ENCODE measurements at regions of chr19 and their contacts with region 1.

Region 1: GRCh38 chr19:51259348-51260245 is 8.7 kb downstream of the SIGLECL1 start:
- DNase-seq: peak; percentile 48
- H3K4me3 ChIP-seq: peak overlapping the region in 1 of 2 experiments; percentile 27; a peak in 1 of 4 replicates
- H3K27ac ChIP-seq: no peak overlapping the region
- H3K4me1 ChIP-seq: no peaks in the 10 kb centered on the region
- H3K27me3 ChIP-seq: peaks cover 12% of the 10 kb centered on the region; the same call in 1 of the 2 replicates
- CTCF ChIP-seq: peak; percentile 70
- EP300 ChIP-seq: no peak
- RAD21 ChIP-seq: peak; percentile 61

Region 2: GRCh38 chr19:51247972-51248590 is 11.5 kb before region 1 on chr19:
- CTCF ChIA-PET with region 1: interaction called, 10 read pairs
- POLR2A ChIA-PET with region 1: no interaction called
- DNase-seq: no peak
- H3K4me3 ChIP-seq: no peak overlapping the region
- H3K27ac ChIP-seq: no peak overlapping the region
- H3K4me1 ChIP-seq: no peaks in the 10 kb centered on the region
- H3K27me3 ChIP-seq: peaks cover 26% of the 10 kb centered on the region; the same call in 1 of the 2 replicates
- CTCF ChIP-seq: no peak
- EP300 ChIP-seq: no peak
- RAD21 ChIP-seq: no peak

Region 3: DNA sequence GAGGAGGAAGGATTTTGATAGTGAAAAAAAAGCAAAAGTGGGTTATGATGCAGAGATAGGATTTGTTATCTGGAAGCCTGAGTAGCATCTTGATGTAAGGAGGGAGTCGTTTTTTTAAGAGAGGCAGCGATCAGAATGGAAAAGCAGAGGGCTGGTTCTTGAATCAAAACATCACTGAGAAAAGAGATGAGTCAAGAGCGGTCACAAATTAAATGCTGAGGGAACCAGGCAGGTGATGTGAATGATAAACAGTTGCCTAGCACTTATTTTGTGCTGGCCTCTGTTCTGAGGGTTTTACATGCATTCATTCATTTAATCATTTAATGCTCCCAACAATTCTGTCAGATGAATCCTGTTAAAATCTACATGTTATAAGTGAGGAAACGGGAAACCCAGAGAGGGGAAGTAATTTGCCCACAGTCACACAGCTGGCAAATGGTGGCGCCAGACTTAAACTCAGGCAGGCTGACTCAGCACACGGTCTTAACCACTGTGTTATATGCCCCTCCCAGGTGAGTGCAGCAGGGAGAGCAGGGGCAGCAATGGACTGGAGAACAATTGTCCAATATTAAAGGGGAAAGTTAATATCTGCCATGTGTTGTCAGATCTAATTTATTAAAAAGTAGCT is 12.7 kb after region 1 on chr19:
- CTCF ChIA-PET with region 1: interaction called, 13 read pairs
- POLR2A ChIA-PET with region 1: no interaction called
- DNase-seq: no peak
- H3K4me3 ChIP-seq: no peak overlapping the region
- H3K27ac ChIP-seq: no peak overlapping the region
- H3K4me1 ChIP-seq: no peaks in the 10 kb centered on the region
- H3K27me3 ChIP-seq: peaks cover 38% of the 10 kb centered on the region
- CTCF ChIP-seq: no peak
- EP300 ChIP-seq: no peak
- RAD21 ChIP-seq: no peak